ENCODE measurements at regions of chr3 and their contacts with region 1.

Region 1: DNA sequence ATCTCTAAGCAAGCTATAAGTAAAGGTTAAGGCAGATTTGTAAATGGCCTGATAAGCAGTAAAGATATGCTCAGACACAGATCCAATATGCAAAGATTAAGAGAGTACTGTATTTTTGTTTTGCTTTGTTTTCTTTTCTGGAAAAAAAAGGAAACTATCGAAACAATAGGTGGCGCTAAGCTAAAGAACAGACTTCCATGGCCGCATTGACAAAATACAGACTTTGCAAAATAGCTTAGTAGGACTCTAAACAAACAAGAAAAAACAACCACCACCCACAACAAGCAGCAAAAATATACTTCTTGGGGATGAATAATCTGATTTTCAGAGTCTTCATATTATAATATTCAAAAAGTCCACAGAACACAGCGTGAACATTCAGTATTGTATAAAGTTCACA is 758.4 kb upstream of the ROBO1 start:
- DNase-seq: peak; percentile 39
- ATAC-seq: no peak; the same call in 1 of the 2 replicates
- H3K4me3 ChIP-seq: no peak overlapping the region
- H3K27ac ChIP-seq: no peak overlapping the region
- H3K4me1 ChIP-seq: peaks cover 6% of the 10 kb centered on the region; the same call in 1 of the 2 replicates
- H3K27me3 ChIP-seq: no peaks in the 10 kb centered on the region
- CTCF ChIP-seq: peak; percentile 86

Region 2: DNA sequence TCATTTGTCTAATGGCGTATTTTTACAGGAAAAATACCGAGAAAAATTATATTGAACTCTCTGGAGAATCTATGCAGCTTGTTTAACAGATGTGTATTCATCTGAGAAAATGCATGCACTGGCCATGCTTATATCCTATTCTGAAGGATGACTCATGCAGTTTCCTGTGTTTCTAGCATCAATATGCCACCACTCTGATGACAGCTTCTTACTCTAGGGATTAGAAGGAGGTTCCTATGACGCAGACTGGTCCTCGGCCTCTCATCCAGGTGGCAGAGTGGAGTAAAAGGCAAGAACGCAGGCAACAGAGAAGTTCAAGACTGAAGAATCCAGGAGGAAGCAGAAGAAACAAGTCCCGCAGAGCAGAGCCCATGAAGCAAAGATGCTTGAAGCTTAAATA is 151.6 kb after region 1 on chr3:
- CTCF ChIA-PET with region 1: interaction called, 8 read pairs
- POLR2A ChIA-PET with region 1: no interaction called
- intact Hi-C with region 1: loop called (anchors 5 kb)
- DNase-seq: peak; percentile 55
- ATAC-seq: peak; percentile 99
- H3K4me3 ChIP-seq: no peak overlapping the region
- H3K27ac ChIP-seq: no peak overlapping the region
- H3K4me1 ChIP-seq: no peaks in the 10 kb centered on the region
- H3K27me3 ChIP-seq: no peaks in the 10 kb centered on the region
- CTCF ChIP-seq: no peak